PC-9 (cell line): ENCODE measurements at regions of chr5 and their contacts with region 1.

Region 1: DNA sequence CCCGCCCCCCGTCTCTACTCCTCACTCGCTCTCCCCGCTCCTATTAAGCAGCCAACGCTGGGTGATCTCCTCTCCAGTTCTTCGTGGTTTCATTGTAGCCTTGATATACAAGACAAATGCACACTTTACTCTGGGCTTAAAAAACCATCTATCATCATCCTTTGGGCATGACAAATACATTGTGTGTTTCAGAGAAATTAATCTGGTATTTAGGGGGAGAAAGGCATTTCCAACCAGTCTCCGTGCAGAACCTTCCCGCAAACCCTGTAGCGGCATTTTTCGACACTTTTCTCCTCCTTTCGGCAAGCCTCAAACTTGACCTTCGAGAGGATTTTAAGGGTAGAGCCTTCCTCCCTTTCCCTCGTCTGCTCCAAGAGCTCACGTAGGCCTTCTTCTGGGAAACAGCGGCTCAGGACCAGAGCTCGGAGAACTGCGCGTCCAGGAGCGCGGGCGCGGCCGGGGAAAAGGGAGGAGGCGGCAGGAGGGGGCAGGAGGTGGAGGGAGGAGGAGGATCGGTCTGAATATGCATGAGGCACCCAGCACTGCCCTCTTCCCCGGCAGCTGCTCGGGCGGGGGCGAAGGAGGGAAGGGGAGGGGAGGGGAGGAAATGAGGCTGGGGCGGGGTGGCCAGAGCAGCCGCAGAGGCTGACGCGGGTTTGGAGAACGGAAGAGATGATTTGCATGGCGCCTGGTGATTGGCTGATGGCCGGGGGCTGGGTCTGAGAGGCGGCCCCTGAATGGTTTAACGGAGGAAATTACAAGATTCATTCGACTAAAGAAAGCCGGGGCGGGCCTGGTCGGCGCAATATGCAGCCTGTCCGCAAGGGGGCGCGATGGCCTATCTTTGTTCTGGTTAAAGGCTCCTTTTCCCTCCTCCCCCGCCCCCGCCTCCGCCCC is 127.5 kb downstream of the TMEM161B start:
- DNase-seq: peak; percentile 93 to 97
- H3K4me3 ChIP-seq: peak overlapping the region; percentile 68
- H3K27ac ChIP-seq: no peak overlapping the region
- H3K4me1 ChIP-seq: peaks cover 7% of the 10 kb centered on the region; the same call in 1 of the 2 replicates
- H3K27me3 ChIP-seq: no peaks in the 10 kb centered on the region
- CTCF ChIP-seq: peak; percentile 65

Region 2: DNA sequence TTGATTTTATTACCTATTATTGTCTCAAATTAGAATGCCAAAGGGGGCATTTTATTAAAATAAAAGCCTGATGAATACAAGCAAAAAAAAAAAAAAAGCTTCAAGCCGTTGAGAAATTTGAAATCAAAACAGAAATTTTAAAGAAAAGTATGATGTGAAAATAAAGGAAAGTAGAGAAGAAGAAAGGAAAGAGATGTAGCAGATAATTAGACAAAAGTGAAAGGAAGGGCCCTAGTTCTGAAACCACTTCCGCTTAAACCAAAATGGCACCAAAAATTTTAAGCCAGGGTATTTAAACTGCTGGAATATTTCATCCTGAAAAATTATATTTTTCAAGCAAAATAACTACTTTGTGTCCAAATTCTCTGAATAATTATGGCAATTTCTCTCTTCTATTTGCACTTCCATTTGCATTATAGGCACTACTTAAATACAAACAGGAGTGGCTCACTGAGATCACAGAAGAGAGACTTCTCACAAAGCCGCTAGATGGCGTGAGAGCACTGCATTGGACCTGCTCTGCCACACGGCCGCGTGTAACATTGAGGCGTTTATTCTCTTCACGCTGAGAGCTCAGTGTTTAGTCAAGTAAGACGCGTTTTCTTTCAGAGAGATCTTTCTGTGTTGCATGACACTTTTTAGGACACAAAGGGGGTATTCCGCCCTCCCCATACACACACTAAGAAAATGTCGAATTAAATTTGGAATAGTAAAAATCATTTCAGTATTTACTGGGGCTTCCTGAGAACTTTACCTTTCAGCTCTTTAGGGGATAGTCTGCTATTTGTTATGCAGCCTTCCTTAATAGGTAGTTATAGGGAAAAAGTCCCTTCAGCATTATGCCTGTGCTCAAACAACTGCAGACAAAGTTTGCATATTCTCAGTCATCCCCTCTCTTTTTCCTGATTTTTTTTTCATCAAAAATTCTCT is 360.0 kb before region 1 on chr5:
- CTCF ChIA-PET with region 1: no interaction called
- POLR2A ChIA-PET with region 1: no interaction called
- intact Hi-C with region 1: loop called (anchors 2 kb)
- DNase-seq: peak; percentile 63 to 69
- H3K4me3 ChIP-seq: peak overlapping the region; percentile 36; the same call in 1 of the 2 replicates
- H3K27ac ChIP-seq: no peak overlapping the region
- H3K4me1 ChIP-seq: no peaks in the 10 kb centered on the region
- H3K27me3 ChIP-seq: no peaks in the 10 kb centered on the region
- CTCF ChIP-seq: peak; percentile 90

Region 3: DNA sequence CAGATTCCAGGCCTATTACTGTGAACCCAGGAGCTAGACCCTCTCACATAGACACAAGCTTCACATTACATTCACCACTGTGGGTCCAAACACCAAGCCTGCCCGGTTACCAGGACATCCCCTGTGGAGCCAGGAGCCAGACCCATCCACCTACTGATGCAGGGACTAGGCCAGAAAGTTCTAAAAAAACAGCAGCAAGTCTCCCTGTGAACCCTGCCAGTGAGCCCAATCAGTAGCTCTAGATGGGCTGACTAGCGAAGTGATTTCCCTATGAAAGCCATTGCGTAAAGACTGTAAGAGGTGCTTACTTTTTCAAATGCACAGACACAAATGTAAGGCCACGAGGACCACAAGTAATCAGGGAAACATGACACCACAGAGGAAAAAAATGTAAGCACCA is 224.8 kb before region 1 on chr5:
- CTCF ChIA-PET with region 1: no interaction called
- POLR2A ChIA-PET with region 1: no interaction called
- intact Hi-C with region 1: loop called (anchors 10 kb)
- DNase-seq: no peak
- H3K4me3 ChIP-seq: no peak overlapping the region
- H3K27ac ChIP-seq: no peak overlapping the region
- H3K4me1 ChIP-seq: no peaks in the 10 kb centered on the region; the same call in 1 of the 2 replicates
- H3K27me3 ChIP-seq: no peaks in the 10 kb centered on the region
- CTCF ChIP-seq: no peak

Region 4: GRCh38 chr5:88190139-88190834 is 49.2 kb after region 1 on chr5:
- CTCF ChIA-PET with region 1: no interaction called
- POLR2A ChIA-PET with region 1: no interaction called
- intact Hi-C with region 1: loop called (anchors 1 kb)
- DNase-seq: peak; percentile 64 to 85
- H3K4me3 ChIP-seq: peak overlapping the region; percentile 57
- H3K27ac ChIP-seq: peak overlapping the region; percentile 80
- H3K4me1 ChIP-seq: peaks cover 12% of the 10 kb centered on the region
- H3K27me3 ChIP-seq: no peaks in the 10 kb centered on the region
- CTCF ChIP-seq: peak; percentile 75

Region 5: DNA sequence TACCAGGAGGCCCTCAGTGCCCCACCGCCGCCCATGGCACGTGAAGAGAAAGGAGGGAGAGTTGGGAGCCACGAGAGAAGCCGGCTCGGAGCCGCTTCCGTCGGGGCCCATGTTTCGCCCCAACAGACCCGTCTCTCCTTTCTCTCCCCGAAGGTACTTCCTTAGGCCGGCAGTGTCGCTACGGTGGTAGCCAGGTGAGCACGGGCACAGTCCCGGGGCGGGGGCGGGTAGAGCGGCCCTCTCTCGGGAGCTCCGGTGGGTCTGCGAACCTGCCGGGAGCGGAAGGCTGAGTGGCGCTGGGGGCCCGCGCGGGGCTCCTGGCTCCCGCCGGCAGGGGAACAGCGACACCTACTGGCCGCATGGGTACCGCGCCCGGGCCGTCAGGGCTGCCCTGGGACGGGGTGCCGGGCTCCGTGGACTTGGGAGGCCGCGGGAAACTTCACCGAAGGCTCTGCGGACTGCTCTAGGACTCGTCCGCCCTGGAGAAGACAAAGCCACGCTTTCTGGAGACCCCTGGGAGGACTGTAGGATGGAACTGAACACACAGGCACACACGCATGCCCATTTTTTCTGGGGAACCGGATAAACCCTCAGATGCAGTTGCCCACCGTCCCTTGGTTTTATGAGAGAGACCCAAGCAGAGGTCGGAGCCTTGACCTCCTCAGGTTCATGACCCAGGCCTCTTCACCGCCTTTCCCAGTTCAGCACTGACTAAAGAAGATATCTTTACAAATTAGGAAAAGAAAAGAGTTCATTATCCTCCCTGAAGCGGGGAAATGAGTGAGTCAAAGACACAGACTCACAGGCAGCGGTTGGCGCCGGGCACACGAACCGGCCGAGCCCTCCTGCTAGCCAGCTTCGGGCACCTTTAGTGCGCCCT is 539.4 kb after region 1 on chr5:
- CTCF ChIA-PET with region 1: interaction called, 4 read pairs
- POLR2A ChIA-PET with region 1: no interaction called
- intact Hi-C with region 1: loop called (anchors 1 kb)
- DNase-seq: peak in 1 of 2 experiments; percentile 86
- H3K4me3 ChIP-seq: peak overlapping the region; percentile 71
- H3K27ac ChIP-seq: no peak overlapping the region
- H3K4me1 ChIP-seq: peaks cover 10% of the 10 kb centered on the region
- H3K27me3 ChIP-seq: no peaks in the 10 kb centered on the region
- CTCF ChIP-seq: peak; percentile 93